WTC11 (cell line): ENCODE measurements at regions of chrX and their contacts with region 1.

Region 1: GRCh38 chrX:107627838-107628661 is at the start of gene PRPS1:
- DNase-seq: peak; percentile 90
- ATAC-seq: peak; percentile 98
- H3K4me3 Mint-ChIP-seq: peak within 1 kb of the TSS; percentile 92
- H3K27ac Mint-ChIP-seq: peak within 1 kb of the TSS; percentile 79
- H3K4me1 Mint-ChIP-seq: peaks cover 24% of the 10 kb centered on the region
- H3K27me3 Mint-ChIP-seq: no peaks in the 10 kb centered on the region; the same call in 1 of the 2 replicates
- CTCF ChIP-seq: no peak
- total RNA-seq, gene PRPS1: 106 to 126 TPM (median 107 TPM) in 3 replicates

Region 2: DNA sequence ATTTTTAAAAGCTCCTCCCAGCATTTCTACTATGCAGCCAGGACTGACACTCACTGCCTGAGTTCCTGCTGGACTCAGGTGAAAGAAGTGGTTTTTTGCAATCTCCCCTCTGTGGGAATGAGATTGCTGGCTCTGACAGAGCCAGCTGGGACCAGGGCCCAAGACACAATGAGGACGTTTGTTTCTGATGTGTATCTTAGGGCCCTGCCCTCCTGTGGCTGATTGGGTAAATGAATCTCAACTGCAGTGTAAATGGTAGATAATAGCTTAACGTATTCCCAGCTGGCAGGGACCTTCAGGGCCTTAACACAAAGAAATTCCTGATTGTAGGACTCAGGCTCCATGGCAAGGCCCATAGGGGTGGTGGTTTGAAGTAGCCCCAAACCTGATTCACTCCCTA is 85.5 kb before region 1 on chrX:
- CTCF ChIA-PET with region 1: interaction called, 14 read pairs
- POLR2A ChIA-PET with region 1: no interaction called
- DNase-seq: peak; percentile 14
- ATAC-seq: peak; percentile 92
- H3K4me3 Mint-ChIP-seq: no peak overlapping the region
- H3K27ac Mint-ChIP-seq: no peak overlapping the region
- H3K4me1 Mint-ChIP-seq: peaks cover 13% of the 10 kb centered on the region
- H3K27me3 Mint-ChIP-seq: no peaks in the 10 kb centered on the region
- CTCF ChIP-seq: no peak

Region 3: GRCh38 chrX:107648332-107648731 is 20.3 kb after region 1 on chrX:
- CTCF ChIA-PET with region 1: no interaction called
- POLR2A ChIA-PET with region 1: no interaction called
- DNase-seq: no peak
- ATAC-seq: no peak
- H3K4me3 Mint-ChIP-seq: no peak overlapping the region
- H3K27ac Mint-ChIP-seq: no peak overlapping the region
- H3K4me1 Mint-ChIP-seq: peaks cover 6% of the 10 kb centered on the region
- H3K27me3 Mint-ChIP-seq: no peaks in the 10 kb centered on the region
- CTCF ChIP-seq: no peak